ENCODE measurements at regions of chr16 and their contacts with region 1.

Region 1: DNA sequence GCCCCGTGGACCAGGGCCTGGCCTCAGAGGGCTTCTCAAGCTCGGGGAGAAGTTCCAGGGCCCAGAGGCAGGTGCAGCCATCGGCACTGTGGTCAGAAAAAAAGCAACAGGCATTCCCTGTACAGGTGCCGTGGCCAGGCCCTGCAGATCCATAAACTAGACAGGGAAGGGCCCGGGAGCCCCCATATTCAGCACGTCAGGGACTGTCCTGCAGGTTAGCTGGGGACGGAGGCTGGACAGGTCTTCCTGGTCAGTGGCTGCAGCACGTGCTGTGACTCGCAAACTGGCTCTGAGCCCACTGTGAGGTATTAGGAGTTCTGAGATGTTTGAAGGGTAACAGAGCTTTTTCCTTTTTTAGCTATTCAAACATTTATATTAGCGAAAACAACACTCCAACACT is 15.0 kb upstream of the C16orf95 start:
- DNase-seq: peak in 6 of 7 donors; percentile 53 to 80 (median 66)
- H3K4me3 ChIP-seq: no peak overlapping the region
- H3K27ac ChIP-seq: no peak overlapping the region
- H3K4me1 ChIP-seq: peaks cover 11 to 18% of the 10 kb centered on the region in 2 donors
- H3K27me3 ChIP-seq: no peaks in the 10 kb centered on the region
- CTCF ChIP-seq: no peak
- POLR2A ChIP-seq: no peak

Region 2: DNA sequence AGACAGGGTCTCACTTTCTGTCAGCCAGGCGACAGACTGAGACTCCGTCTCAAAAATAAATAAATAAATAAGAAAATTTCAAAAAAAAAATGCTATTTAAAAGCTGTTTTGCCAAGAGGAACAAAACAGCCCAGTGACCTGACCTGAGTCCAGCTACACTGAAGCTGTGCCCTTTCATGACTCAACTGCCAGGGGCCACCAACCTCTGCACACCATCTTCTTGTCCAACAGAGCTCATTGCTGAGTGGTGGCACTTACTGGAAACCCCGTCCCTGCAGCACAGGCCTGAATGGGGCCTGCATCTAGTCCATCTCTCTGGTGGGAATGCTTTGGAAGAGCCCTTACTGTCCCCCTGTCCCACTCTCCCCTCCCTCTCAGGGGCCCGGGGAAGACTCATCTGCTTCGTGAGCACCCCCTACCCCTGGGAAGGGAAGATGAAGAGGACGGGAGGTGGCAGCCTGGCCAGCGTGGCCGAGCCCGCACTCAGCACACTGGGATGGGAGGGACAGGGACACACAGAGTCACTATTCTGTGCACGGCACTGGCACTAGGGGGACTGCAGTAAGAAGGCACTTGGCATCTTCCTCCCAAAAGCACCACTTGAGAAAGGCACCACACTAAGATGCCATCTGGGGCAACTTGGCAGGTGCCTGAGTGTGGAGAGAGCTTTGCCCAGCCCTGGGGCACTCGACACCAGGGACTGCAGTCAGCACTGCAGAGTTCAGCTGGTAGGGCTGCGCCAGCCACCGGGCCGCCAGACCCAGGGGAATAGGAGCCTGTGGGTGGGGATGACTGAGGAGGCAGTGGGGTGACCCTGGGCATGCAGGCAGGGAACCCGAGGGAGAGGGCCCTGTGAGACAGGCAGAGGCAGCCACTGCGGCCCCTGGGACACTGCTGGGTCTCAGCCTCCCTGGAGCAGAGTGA is 37.9 kb after region 1 on chr16:
- intact Hi-C with region 1: loop called in 1 of 2 experiments (anchors 5 kb)
- DNase-seq: no peak
- H3K4me3 ChIP-seq: no peak overlapping the region
- H3K27ac ChIP-seq: peak overlapping the region in 1 of 5 donors; percentile 64
- H3K4me1 ChIP-seq: peaks cover 11 to 39% of the 10 kb centered on the region in 2 donors
- H3K27me3 ChIP-seq: no peaks in the 10 kb centered on the region
- CTCF ChIP-seq: no peak
- POLR2A ChIP-seq: no peak

Region 3: GRCh38 chr16:87492721-87493607 is 160.8 kb after region 1 on chr16 and contains the start of gene ZCCHC14:
- intact Hi-C with region 1: no loop called
- DNase-seq: peak; percentile 98 to 100 (median 99)
- H3K4me3 ChIP-seq: peak within 1 kb of the TSS in 2 of 4 donors; percentile 26 to 66
- H3K27ac ChIP-seq: peak within 1 kb of the TSS in 3 of 5 donors; percentile 55 to 96 (median 84)
- H3K4me1 ChIP-seq: peaks cover 30 to 34% of the 10 kb centered on the region in 2 donors
- H3K27me3 ChIP-seq: no peaks in the 10 kb centered on the region
- CTCF ChIP-seq: no peak
- POLR2A ChIP-seq: peak in 1 of 2 donors; percentile 88
- total RNA-seq, gene ZCCHC14: 17.3 to 49.8 (median 34.5) TPM

Measured in adrenal gland (tissue), 19 donors.